ENCODE measurements at regions of chr2 and their contacts with region 1.

Region 1: DNA sequence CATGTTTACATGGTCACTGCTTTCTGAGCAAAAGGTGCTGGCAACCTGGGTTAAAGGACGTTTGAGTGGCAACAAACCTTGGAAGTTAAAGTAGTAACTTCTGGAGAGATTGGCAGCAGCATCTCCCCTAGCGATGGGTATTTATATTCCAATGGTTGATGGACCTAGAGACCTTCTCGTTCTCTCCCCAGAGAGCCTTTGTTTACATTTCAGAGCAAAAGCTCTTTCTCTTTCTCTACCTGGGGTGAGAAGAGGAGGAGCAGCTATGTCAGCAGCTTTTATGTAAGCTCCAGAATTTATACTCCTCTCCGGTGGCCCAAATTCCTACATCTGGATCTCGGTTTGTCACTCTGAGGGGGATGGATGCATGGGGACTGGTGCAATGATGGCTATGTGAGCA is 213.7 kb upstream of the ARL4C start:
- DNase-seq: no peak
- ATAC-seq: no peak
- H3K4me3 ChIP-seq: no peak overlapping the region
- H3K27ac ChIP-seq: no peak overlapping the region
- H3K4me1 ChIP-seq: no peaks in the 10 kb centered on the region
- H3K27me3 ChIP-seq: peaks cover 0 to 33% (median 0%) of the 10 kb centered on the region in 7 donors
- CTCF ChIP-seq: no peak

Region 2: DNA sequence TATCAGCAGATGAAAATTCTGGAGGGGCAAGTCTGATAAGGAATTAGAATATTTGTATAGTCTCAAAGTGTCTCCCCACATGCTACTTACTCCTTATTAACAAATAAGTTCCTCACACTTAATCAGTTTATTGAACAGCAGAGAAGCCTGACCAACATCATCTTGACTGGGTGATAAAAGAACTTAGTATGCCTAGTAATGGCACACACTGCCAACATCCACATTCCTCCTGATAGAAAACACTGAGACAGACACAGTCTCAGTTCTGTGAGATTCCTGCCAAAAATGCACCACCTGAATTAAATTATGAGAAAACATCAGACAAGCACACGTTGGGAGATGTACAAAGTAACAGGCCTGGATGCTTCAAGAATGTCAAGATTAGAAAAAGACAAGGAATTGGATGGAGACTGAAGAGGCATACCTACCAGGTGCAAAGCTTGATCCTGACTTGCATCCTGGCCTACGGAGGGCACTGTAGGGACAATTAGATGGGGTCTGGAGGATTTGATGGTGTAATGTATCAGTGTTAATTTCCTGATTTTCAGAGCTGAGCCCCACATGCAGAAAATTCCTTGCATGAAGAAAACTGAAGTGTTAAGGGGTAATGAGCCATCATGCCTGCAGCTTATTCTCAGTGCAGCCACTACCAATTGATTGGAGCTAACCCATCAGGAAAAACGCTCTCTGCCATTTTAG is 40.8 kb after region 1 on chr2:
- intact Hi-C with region 1: loop called in 1 of 10 experiments (anchors 2 kb)
- DNase-seq: no peak
- ATAC-seq: no peak
- H3K4me3 ChIP-seq: no peak overlapping the region
- H3K27ac ChIP-seq: no peak overlapping the region
- H3K4me1 ChIP-seq: no peaks in the 10 kb centered on the region
- H3K27me3 ChIP-seq: no peaks in the 10 kb centered on the region
- CTCF ChIP-seq: no peak